Left colon (tissue), 2 donors: ENCODE measurements at regions of chr6 and their contacts with region 1.

Region 1: DNA sequence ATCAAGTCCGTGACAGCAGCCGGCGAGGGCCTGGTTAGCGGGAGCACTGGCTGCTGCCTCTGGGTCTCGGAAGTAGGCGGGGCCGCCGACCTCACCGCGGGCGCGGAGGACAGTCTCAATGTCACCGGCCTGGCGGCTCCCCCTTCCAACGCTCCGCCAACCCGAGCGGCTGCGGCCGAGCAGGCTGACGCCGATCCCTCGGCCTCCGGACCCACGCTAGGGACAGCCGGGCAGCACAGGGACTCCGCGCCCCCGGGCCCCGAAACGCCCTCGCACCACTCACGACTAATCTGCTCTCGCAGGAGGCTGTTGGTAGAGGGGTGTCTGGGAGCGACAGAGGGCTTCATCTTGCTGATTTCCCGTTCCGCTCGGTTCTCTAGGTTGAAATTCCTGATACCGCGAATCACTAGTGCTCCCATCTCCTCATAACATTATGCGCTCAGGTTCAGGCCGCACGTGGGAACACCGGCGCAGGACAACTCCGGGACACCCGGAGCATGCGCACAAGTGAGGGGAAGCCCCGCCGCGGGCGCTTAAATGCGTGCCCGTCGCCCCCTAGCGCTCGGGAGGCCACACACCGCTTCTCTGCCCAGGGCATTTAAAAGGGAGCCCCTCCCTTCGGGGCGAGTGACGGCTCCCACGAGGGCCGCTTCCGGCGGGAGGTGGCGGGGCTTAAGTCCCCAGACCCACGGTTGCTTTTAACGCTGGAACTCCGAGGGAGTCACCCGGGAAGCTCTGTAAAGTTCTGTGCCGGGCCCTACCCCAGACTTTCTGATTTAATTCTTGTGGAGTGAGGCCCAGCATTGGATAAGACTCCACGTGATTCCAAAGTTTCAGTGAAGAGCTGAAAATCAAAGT is at the start of gene NDUFAF4:
- DNase-seq: peak; percentile 95 to 98
- ATAC-seq: peak; percentile 96
- total RNA-seq, gene NDUFAF4: 41.3 to 43.3 TPM

Region 2: GRCh38 chr6:96659084-96659845 is 238.3 kb before region 1 on chr6:
- intact Hi-C with region 1: no loop called
- DNase-seq: no peak
- ATAC-seq: no peak

Region 3: DNA sequence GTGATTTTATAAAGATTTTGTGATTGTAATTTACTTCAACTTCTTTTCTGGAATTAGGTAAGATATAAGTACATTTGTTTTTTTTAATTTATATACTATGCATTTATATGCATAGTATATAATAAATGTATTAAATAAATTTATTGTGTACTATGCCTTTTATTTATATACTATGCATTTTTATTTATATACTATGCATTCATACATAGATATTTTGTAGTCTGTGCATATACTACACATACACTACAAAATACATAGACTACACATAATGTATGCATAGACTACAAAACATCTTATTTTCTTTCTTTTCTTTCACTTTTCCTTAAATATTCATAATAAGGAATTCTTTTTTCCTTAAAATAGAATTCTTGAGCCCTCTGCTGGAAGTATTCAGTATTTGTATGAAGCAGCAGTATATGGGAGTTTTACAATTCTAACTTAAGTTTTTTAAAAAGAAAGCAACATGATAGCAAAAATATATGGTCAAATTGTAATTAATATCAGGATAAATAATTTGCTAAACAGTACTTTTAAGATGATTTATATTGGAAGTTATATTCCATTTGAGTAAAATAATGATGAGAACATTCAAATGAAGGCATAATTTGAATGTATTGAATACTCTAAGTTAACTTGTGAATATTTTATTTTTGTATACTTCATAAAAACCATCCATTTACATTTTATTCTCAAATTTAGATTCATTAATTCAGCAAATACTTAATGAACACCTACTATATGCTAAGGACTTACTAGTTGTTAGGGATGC is 156.2 kb after region 1 on chr6:
- intact Hi-C with region 1: loop called in 1 of 2 experiments (anchors 5 kb)
- DNase-seq: no peak
- ATAC-seq: no peak